K562 (cell line): ENCODE measurements at regions of chr14 and their contacts with region 1.

Region 1: DNA sequence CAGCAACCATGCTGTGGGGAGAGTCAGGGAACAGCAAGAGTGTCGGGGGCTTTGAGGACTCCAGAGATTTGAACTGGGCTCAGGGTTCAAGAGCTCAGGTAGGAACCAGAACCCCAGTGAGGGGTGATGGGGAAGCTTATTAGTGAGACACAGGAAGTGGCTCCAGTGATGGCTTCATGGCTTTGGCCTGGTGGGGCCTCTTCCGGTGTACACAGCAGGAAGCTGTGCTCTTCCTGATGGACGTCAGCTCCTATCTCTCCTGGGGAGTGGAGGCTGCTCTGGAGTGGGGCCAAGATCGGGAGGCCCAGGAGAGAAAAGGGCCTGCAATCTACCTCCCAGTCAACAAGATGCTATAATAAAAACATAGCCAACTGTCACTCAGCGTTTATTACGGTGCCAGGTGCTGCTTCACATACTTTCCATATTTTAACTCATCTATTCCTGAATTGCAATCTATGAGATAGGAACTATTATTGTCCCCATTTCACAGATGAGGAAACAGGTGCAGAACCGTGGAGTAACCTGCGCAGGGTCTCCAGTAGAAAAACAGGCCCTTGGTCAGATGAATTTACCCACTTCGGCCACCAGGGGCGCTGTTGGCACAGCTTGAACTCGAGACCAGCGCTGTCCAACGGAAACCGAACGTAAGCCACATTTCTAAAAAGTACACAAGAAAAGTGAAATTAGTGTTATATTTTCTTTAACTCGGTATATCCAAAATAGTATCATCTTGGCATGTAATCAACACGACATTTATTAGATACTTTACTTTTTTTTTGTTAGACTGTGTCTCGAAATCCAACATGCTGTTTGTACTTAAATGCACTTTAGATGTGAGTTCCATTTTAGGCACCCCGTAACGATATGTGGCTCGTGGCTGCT is 63.6 kb upstream of the DLK1 start:
- DNase-seq: peak; percentile 72 to 85 (median 74)
- ATAC-seq: peak; percentile 84
- H3K4me3 ChIP-seq: no peak overlapping the region
- H3K27ac ChIP-seq: peak overlapping the region; percentile 45; the same call in 2 of the 3 replicates
- H3K4me1 ChIP-seq: peaks cover 7 to 27% of the 10 kb centered on the region in 2 experiments; a peak in 4 of 5 replicates
- H3K27me3 ChIP-seq: no peaks in the 10 kb centered on the region
- CTCF ChIP-seq: peak; percentile 75 to 89 (median 78)
- EP300 ChIP-seq: no peak
- POLR2A ChIP-seq: no peak
- RAD21 ChIP-seq: peak; percentile 65 to 71

Region 2: DNA sequence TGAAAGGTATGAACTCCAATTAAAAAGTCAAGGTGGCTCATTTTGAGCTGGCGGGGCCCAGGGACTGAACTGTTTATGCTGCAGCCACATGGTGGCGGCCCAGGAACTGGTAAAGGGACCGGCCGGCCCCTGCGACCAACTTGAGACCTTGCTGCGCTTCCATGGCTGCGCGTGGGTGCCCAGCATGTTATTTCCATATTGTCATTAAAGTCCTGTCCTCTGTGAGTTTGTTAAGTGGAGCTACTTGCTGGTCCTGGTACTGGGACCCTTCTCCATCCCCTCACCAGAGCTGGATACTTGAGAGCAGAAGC is 138.2 kb before region 1 on chr14:
- CTCF ChIA-PET with region 1: no interaction called
- POLR2A ChIA-PET with region 1: no interaction called
- in situ Hi-C with region 1: no loop called
- intact Hi-C with region 1: no loop called
- DNase-seq: peak; percentile 66 to 74 (median 70)
- ATAC-seq: peak; percentile 93
- H3K4me3 ChIP-seq: no peak overlapping the region
- H3K27ac ChIP-seq: no peak overlapping the region
- H3K4me1 ChIP-seq: no peaks in the 10 kb centered on the region; a peak in 1 of 5 replicates
- H3K27me3 ChIP-seq: no peaks in the 10 kb centered on the region
- CTCF ChIP-seq: peak; percentile 74 to 78 (median 74)
- EP300 ChIP-seq: no peak
- POLR2A ChIP-seq: no peak
- RAD21 ChIP-seq: peak; percentile 65 to 85

Region 3: DNA sequence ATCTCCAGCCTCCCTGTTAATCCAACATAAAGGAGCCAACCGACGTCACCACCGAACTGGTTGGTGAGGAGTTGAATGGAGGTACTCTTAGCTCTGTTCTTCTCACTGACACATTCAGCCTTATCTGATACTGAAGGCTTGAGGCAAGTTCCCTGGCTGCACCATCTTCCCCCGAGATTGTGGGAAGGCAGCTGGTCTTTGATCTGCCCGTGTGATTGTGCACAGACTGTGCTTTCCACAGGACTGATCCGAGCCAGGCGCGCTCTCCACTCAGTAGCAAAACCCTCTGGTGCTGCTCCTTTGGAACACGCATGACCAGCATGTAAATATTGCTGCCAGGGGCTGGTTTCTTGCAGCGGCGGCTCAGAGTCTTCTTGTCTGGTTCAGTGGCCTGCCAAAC is 33.5 kb after region 1 on chr14:
- CTCF ChIA-PET with region 1: no interaction called
- POLR2A ChIA-PET with region 1: no interaction called
- in situ Hi-C with region 1: no loop called
- intact Hi-C with region 1: loop called (anchors 5 kb)
- DNase-seq: peak in 2 of 4 experiments; percentile 48 to 54
- ATAC-seq: peak; percentile 58
- H3K4me3 ChIP-seq: no peak overlapping the region
- H3K27ac ChIP-seq: peak overlapping the region; percentile 43; the same call in 1 of the 3 replicates
- H3K4me1 ChIP-seq: peaks cover 46 to 59% of the 10 kb centered on the region in 2 experiments
- H3K27me3 ChIP-seq: no peaks in the 10 kb centered on the region
- CTCF ChIP-seq: no peak
- EP300 ChIP-seq: no peak
- POLR2A ChIP-seq: no peak
- RAD21 ChIP-seq: no peak

Region 4: GRCh38 chr14:100733152-100733850 is 70.2 kb after region 1 on chr14:
- CTCF ChIA-PET with region 1: no interaction called
- POLR2A ChIA-PET with region 1: no interaction called
- in situ Hi-C with region 1: loop called (anchors 5 kb)
- intact Hi-C with region 1: no loop called
- DNase-seq: no peak
- ATAC-seq: no peak
- H3K4me3 ChIP-seq: no peak overlapping the region
- H3K27ac ChIP-seq: no peak overlapping the region
- H3K4me1 ChIP-seq: peaks cover 5 to 26% of the 10 kb centered on the region in 2 experiments; a peak in 3 of 5 replicates
- H3K27me3 ChIP-seq: no peaks in the 10 kb centered on the region
- CTCF ChIP-seq: no peak
- EP300 ChIP-seq: no peak
- POLR2A ChIP-seq: no peak
- RAD21 ChIP-seq: no peak

Region 5: DNA sequence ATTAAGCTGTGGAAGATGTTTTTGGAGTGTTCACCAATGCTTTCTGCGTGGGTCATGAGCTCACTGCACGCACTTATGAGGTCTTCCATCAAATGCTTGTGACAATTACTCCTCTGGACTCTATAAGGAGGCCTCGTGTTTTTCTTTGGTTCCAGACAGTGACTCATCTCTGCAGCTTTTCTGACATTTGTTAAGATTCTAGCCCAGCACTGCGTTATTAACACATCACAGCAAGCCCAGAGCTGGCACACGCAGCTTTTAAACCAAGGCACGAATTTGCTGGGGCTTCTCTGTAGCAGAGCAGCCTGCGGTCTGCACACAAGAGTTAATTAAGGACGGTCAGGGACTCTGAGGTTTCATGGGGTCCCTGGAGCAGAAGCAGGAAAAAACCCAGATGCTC is 179.7 kb after region 1 on chr14:
- CTCF ChIA-PET with region 1: no interaction called
- POLR2A ChIA-PET with region 1: no interaction called
- in situ Hi-C with region 1: loop called (anchors 10 kb)
- intact Hi-C with region 1: no loop called
- DNase-seq: no peak
- ATAC-seq: no peak
- H3K4me3 ChIP-seq: no peak overlapping the region
- H3K27ac ChIP-seq: no peak overlapping the region
- H3K4me1 ChIP-seq: peaks cover 0 to 27% of the 10 kb centered on the region in 2 experiments; a peak in 3 of 5 replicates
- H3K27me3 ChIP-seq: no peaks in the 10 kb centered on the region
- CTCF ChIP-seq: no peak
- EP300 ChIP-seq: no peak
- POLR2A ChIP-seq: no peak
- RAD21 ChIP-seq: no peak

Region 6: GRCh38 chr14:100850841-100851585 is 187.9 kb after region 1 on chr14:
- CTCF ChIA-PET with region 1: no interaction called
- POLR2A ChIA-PET with region 1: no interaction called
- in situ Hi-C with region 1: loop called (anchors 10 kb)
- intact Hi-C with region 1: loop called (anchors 1 kb)
- DNase-seq: peak; percentile 73 to 78 (median 76)
- ATAC-seq: peak; percentile 99
- H3K4me3 ChIP-seq: no peak overlapping the region
- H3K27ac ChIP-seq: no peak overlapping the region
- H3K4me1 ChIP-seq: peaks cover 2 to 14% of the 10 kb centered on the region in 2 experiments; a peak in 3 of 5 replicates
- H3K27me3 ChIP-seq: no peaks in the 10 kb centered on the region
- CTCF ChIP-seq: peak; percentile 82 to 87 (median 83)
- EP300 ChIP-seq: no peak
- POLR2A ChIP-seq: no peak
- RAD21 ChIP-seq: peak; percentile 72 to 89